Activated CD4-positive, alpha-beta T cell treated with anti-CD3 and anti-CD28 coated beads for 36 hours (primary cell): ENCODE measurements at regions of chr11 and their contacts with region 1.

Region 1: DNA sequence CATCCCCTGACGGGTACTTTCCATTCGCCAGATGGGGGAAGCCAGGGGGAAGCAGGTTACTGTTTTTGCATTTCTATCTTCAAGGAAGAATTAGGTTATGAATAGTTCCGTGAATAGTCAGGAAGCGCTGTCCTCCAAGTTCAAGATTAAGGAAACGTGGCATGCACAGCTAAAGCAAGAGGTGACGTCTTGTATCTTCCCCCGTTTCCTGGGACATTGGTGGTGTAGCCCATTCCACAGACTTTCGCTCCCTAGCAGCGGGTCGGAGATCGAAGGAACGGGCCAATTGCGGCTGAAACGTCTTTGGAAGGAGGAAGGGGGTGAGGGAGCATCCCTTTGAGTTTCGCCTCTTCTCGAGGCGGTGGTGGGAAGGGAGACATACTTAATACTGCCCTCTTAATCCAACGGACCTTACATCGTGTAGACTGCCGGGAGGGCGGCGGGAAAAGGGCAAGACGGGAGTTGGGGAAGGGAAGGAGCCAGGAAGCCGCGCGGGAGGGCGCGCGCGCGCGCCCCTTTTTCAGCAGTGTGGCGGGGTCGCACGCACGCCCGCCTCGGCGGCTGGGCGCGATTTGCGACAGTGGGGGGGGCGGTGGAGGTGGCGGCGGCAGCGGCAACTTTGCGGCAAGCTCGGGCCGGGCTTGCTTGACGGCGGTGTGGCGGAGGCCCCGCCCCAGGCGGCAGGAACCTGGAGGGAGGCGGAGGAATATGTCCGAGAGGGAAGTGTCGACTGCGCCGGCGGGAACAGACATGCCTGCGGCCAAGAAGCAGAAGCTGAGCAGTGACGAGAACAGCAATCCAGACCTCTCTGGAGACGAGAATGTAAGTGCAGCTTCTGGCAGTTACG is at the start of gene EED:
- DNase-seq: peak; percentile 97
- ATAC-seq: peak; percentile 79
- H3K4me3 Mint-ChIP-seq: no peak within 1 kb of the TSS
- H3K27ac Mint-ChIP-seq: no peak within 1 kb of the TSS
- H3K4me1 Mint-ChIP-seq: peaks cover 42% of the 10 kb centered on the region
- H3K27me3 Mint-ChIP-seq: peaks cover 3% of the 10 kb centered on the region
- total RNA-seq, gene EED: 90.3 to 127 TPM

Region 2: GRCh38 chr11:85627998-85628770 is 616.6 kb before region 1 on chr11 and contains the start of gene TMEM126B:
- CTCF ChIA-PET with region 1: no interaction called
- POLR2A ChIA-PET with region 1: no interaction called
- intact Hi-C with region 1: loop called (anchors 1 kb)
- DNase-seq: peak; percentile 99
- ATAC-seq: peak; percentile 95
- H3K4me3 Mint-ChIP-seq: peak within 1 kb of the TSS; percentile 98
- H3K27ac Mint-ChIP-seq: peak within 1 kb of the TSS; percentile 100
- H3K4me1 Mint-ChIP-seq: peaks cover 35% of the 10 kb centered on the region
- H3K27me3 Mint-ChIP-seq: no peaks in the 10 kb centered on the region
- total RNA-seq, gene TMEM126B: 62.7 to 74.2 TPM

Region 3: GRCh38 chr11:85664615-85665481 is 579.9 kb before region 1 on chr11 and contains the start of gene CREBZF:
- CTCF ChIA-PET with region 1: no interaction called
- POLR2A ChIA-PET with region 1: no interaction called
- intact Hi-C with region 1: loop called (anchors 1 to 10 kb)
- DNase-seq: peak; percentile 97
- ATAC-seq: peak; percentile 88
- H3K4me3 Mint-ChIP-seq: peak within 1 kb of the TSS; percentile 100
- H3K27ac Mint-ChIP-seq: peak within 1 kb of the TSS; percentile 99
- H3K4me1 Mint-ChIP-seq: peaks cover 29% of the 10 kb centered on the region
- H3K27me3 Mint-ChIP-seq: no peaks in the 10 kb centered on the region
- total RNA-seq, gene CREBZF: 30.4 to 35.9 TPM

Region 4: GRCh38 chr11:85772695-85773094 is 472.1 kb before region 1 on chr11:
- CTCF ChIA-PET with region 1: no interaction called
- POLR2A ChIA-PET with region 1: no interaction called
- intact Hi-C with region 1: no loop called
- DNase-seq: no peak
- ATAC-seq: no peak
- H3K4me3 Mint-ChIP-seq: no peak overlapping the region
- H3K27ac Mint-ChIP-seq: no peak overlapping the region
- H3K4me1 Mint-ChIP-seq: peaks cover 33% of the 10 kb centered on the region
- H3K27me3 Mint-ChIP-seq: no peaks in the 10 kb centered on the region

Region 5: DNA sequence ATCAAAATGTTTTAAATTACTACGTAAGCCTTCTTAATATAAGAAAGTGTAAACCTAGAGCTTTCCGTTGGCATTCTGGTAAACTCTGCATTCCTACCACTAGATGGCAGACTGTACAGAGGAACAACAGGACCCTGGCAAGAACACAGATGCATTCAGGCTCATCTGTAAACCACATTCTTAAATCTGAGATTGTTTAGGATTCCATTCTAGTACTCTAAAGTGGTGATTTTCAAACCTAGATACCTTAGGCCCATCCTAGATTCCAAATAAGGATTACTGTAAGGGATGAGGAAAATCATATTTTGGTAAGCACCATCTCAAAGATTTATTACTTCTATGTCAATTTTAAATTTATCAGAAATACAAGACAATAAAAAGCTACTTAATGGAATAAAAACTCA is 202.8 kb before region 1 on chr11:
- CTCF ChIA-PET with region 1: interaction called, 5 read pairs
- POLR2A ChIA-PET with region 1: interaction called, 4 read pairs
- intact Hi-C with region 1: loop called (anchors 1 kb)
- DNase-seq: peak; percentile 63
- ATAC-seq: peak; percentile 70
- H3K4me3 Mint-ChIP-seq: peak overlapping the region; percentile 20
- H3K27ac Mint-ChIP-seq: peak overlapping the region; percentile 68
- H3K4me1 Mint-ChIP-seq: peaks cover 71% of the 10 kb centered on the region
- H3K27me3 Mint-ChIP-seq: no peaks in the 10 kb centered on the region

Region 6: DNA sequence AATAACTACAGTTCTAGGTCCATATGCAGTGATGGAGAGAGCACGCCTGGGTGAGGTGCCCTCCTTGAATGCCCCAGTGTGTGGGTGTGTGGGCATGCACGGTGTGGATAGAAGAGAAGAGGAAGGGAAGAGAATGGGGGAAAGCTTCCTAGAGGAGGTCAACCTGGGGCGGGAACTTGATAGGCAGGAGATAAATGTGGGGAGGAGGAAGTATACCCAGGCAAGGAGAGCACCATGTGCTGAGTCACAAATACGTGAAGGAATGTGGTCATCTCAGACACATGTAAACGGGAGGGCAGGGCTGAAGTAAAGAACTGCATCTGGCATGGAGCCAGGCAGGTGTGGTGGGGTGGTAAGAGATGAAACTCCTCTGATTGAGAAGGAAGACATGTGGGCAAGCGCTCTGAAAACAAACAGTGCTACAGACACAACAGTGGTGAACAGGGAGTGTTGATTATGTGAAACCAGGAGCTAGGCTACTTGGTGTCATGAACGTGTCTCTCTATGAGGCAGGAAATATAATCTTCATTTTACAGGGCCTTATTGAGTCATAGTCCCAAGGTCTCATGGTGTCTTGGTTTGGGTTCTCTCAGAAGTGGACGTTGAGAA is 61.7 kb before region 1 on chr11:
- CTCF ChIA-PET with region 1: no interaction called
- POLR2A ChIA-PET with region 1: no interaction called
- intact Hi-C with region 1: loop called in 1 of 2 experiments (anchors 2 kb)
- DNase-seq: peak; percentile 89
- ATAC-seq: peak; percentile 84
- H3K4me3 Mint-ChIP-seq: no peak overlapping the region
- H3K27ac Mint-ChIP-seq: no peak overlapping the region
- H3K4me1 Mint-ChIP-seq: peaks cover 6% of the 10 kb centered on the region
- H3K27me3 Mint-ChIP-seq: no peaks in the 10 kb centered on the region

Region 7: GRCh38 chr11:86218125-86219084 is 26.3 kb before region 1 on chr11:
- CTCF ChIA-PET with region 1: interaction called, 8 read pairs
- POLR2A ChIA-PET with region 1: interaction called, 6 read pairs
- intact Hi-C with region 1: loop called in 1 of 2 experiments (anchors 2 kb)
- DNase-seq: peak; percentile 79
- ATAC-seq: peak; percentile 40
- H3K4me3 Mint-ChIP-seq: peak overlapping the region; percentile 26
- H3K27ac Mint-ChIP-seq: peak overlapping the region; percentile 91
- H3K4me1 Mint-ChIP-seq: peaks cover 78% of the 10 kb centered on the region
- H3K27me3 Mint-ChIP-seq: no peaks in the 10 kb centered on the region

Region 8: GRCh38 chr11:86302100-86302793 is 57.5 kb after region 1 on chr11 and contains the start of gene HIKESHI:
- CTCF ChIA-PET with region 1: no interaction called
- POLR2A ChIA-PET with region 1: interaction called, 3 read pairs
- intact Hi-C with region 1: loop called in 1 of 2 experiments (anchors 1 kb)
- DNase-seq: peak; percentile 97
- ATAC-seq: peak; percentile 99
- H3K4me3 Mint-ChIP-seq: peak within 1 kb of the TSS; percentile 96
- H3K27ac Mint-ChIP-seq: peak within 1 kb of the TSS; percentile 99
- H3K4me1 Mint-ChIP-seq: peaks cover 31% of the 10 kb centered on the region
- H3K27me3 Mint-ChIP-seq: no peaks in the 10 kb centered on the region
- total RNA-seq, gene HIKESHI: 50.2 to 51.3 TPM